ENCODE measurements at regions of chr12 and their contacts with region 1.

Region 1: DNA sequence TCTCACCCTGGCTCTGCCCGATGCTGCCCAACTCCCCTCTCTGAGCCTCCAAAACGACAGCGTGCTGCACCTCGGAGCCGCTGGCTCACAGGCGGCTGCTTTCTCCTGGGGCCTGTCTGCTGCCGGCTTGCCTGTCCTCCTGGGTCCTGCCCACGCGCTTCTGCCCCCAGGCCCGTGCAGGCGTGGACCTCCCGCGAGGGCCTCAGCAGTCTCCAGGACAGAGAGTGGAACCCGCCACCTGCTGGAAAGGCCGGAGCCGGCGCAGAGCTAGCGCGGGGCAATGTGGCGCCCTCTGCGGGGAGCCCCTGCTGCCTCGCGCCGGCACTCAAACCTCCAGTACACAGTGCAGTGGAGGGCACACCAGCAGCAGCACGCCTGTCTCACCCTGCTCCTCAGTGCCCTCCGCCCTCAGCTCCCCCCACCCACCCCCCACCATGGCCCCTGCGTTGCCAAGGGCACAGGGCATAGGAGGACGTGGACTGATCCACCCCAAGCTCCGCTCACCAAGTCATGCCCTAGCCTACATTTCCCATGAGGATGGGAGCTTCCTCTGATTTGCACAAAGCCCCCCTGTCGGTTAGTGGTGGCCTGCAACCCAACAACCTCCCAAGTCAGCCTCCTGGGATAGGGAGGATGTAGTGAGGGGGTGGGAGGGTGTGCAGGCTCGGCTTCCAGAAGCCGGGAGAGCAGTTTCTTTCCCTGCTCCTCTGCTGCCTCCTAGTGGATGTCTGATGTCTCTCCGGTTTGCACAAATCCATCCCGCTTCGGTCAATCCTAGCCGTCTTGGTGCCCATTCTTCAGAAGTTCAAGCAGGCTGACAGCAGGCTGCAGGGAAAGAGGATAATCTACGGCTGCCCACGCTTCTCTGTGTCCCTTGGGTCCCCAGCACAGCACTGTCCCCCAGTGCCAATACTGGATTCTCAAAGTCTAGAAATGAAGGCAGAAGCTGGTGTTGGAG is 25.2 kb downstream of the KRT8 start:
- DNase-seq: peak; percentile 70
- H3K4me3 ChIP-seq: no peak overlapping the region
- H3K27ac ChIP-seq: no peak overlapping the region
- H3K4me1 ChIP-seq: peaks cover 3% of the 10 kb centered on the region
- CTCF ChIP-seq: peak; percentile 85

Region 2: DNA sequence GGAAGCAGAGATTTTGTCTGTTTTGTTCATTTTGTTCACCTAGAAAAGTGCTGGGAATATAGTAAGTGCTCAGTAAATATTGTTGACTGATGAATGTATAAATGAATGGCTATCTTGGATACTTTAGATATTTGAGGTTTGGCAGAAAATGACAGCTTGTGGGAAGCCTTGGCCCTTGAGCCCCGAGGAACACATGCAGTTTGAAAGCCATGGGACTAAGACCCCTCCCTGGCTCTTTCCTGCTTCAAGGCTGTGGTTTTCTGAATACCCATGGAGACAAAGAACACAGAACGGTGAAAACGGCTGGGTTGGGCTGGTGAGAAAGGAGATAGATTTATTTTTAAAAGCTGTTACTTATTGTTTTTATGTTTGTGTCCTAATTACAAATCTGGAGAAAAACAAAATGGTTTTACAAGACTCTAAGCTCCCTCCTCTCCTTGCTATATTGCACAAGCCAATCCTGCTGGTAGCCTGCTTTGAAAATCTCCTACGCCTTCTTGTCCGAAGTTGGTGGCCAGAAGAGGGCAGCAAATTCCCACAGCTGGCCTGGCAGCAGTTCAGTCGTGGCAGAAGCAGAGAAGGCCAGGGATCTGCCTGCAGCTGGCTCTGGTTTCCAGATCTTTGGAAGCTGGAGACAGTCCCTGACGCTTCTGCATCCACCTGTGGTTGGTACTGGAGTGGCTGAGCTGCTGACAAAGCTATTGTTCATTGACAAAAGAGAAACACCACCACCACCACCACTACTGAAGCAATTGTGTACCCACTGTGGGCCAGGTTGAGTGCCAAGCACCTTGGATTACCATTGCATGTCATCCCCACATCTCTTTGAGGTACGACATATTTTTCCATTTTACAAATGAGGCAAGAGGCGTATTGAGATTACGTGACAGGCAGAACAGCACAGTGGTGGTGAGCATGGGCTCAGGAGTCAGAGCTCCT is 507.2 kb before region 1 on chr12:
- CTCF ChIA-PET with region 1: no interaction called
- POLR2A ChIA-PET with region 1: no interaction called
- intact Hi-C with region 1: loop called (anchors 5 kb)
- DNase-seq: peak; percentile 61
- H3K4me3 ChIP-seq: no peak overlapping the region
- H3K27ac ChIP-seq: no peak overlapping the region
- H3K4me1 ChIP-seq: no peaks in the 10 kb centered on the region
- CTCF ChIP-seq: peak; percentile 80

Region 3: DNA sequence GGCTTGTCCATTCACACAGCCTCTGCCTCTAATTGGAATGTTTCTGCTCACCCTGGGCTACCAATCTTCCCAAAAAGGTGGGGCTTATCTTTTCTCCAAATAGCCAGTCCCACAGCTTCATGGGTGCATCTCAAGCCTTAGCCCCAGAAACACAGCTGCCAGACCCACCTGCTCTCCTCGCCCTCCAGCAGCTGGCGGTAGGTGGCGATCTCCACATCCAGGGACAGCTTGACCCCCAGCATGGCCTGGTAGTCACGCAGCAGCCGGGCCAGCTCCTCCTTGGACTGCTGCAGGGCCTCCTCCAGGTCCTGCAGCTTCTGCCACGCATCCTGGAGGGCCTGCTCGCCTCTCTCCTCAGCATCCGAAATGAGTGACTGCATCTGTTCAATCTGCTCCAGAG is 187.4 kb before region 1 on chr12:
- CTCF ChIA-PET with region 1: no interaction called
- POLR2A ChIA-PET with region 1: no interaction called
- intact Hi-C with region 1: loop called (anchors 1 kb)
- DNase-seq: peak; percentile 25
- H3K4me3 ChIP-seq: no peak overlapping the region
- H3K27ac ChIP-seq: no peak overlapping the region
- H3K4me1 ChIP-seq: no peaks in the 10 kb centered on the region
- CTCF ChIP-seq: peak; percentile 67

Region 4: GRCh38 chr12:53054112-53054833 is 174.6 kb after region 1 on chr12:
- CTCF ChIA-PET with region 1: no interaction called
- POLR2A ChIA-PET with region 1: no interaction called
- intact Hi-C with region 1: no loop called
- DNase-seq: peak; percentile 93
- H3K4me3 ChIP-seq: peak overlapping the region; percentile 75
- H3K27ac ChIP-seq: no peak overlapping the region
- H3K4me1 ChIP-seq: peaks cover 10% of the 10 kb centered on the region
- CTCF ChIP-seq: no peak

Measured in OCI-LY7 (cell line).